Activated CD8-positive, alpha-beta memory T cell treated with anti-CD3 and anti-CD28 coated beads, Interleukin-2, amount 10 ng/mL, durations not matched to agents 7 days and 5 days (primary cell): ENCODE measurements at regions of chr12 and their contacts with region 1.

Region 1: DNA sequence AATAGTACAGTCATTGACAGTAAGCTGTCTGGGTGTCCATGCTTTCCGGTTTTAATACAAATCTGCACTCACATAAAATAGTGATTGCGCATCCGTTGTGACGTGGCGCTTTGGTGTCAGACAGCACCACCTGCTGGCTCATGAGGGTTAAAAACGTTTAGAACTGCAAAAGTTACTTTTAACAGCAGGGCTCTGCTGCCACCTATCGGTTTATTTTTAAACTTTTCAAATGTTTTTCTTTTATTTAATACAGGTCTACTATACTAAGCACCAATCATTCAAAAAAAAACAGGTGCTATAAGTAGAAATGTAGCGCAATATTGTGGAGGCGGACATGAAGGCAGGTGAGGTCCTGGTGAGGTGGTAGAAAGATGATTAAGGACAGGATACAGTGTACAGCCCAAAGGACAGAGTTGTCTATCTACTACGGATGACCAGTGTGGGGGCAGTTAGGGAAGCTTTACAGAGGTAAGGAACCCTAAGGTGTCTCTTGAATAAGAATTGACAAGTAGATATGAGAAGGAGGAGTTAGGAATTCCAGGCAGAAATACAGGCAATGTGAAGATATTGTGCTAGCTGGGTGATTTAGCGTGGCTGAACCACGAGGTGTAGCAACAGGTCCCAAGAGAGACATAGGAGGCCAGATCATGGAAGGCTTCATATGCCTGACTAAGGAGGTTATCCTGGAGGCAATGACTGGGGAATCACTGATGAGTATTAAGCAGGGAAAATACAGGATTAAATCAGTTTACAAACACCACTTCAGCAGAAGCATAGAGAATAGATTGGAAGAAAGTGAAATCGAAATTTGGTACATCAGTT is 91.5 kb upstream of the PRB2 start:
- DNase-seq: peak; percentile 88
- ATAC-seq: peak; percentile 91
- H3K4me3 Mint-ChIP-seq: no peak overlapping the region
- H3K27ac Mint-ChIP-seq: no peak overlapping the region
- H3K4me1 Mint-ChIP-seq: peaks cover 8% of the 10 kb centered on the region
- H3K27me3 Mint-ChIP-seq: peaks cover 22% of the 10 kb centered on the region

Region 2: DNA sequence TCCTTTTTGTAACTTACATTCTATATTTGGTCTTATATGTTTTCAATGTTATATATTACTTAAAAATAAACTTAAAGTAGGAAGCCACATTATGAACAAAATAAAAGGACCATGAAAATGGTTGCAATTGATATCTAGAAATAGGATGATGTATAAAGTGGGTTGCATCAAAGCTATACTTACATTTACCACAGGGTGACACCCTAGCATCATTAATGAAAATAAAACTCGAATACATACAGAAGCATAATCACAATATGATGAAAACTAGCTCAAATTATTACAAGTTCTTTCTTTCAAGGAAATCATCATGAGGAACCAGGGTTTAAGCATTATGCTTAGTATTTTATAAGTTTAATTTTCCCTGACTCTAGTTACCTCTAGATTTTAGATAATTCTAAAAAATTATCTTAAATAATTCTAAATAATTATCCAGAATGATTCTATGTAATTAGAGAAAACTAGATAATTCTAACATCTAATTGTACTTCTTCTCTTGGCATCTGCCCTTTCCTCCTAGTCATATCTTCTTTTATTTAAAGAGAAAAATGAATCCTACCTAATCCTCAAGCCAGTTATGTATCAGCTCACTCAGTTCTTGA is 715.6 kb before region 1 on chr12:
- CTCF ChIA-PET with region 1: interaction called, 20 read pairs
- DNase-seq: no peak
- ATAC-seq: no peak
- H3K4me3 Mint-ChIP-seq: no peak overlapping the region
- H3K27ac Mint-ChIP-seq: no peak overlapping the region
- H3K4me1 Mint-ChIP-seq: no peaks in the 10 kb centered on the region
- H3K27me3 Mint-ChIP-seq: peaks cover 71% of the 10 kb centered on the region

Region 3: GRCh38 chr12:11228296-11228879 is 258.4 kb before region 1 on chr12:
- CTCF ChIA-PET with region 1: interaction called, 24 read pairs
- DNase-seq: peak; percentile 51
- ATAC-seq: peak; percentile 53
- H3K4me3 Mint-ChIP-seq: no peak overlapping the region
- H3K27ac Mint-ChIP-seq: no peak overlapping the region
- H3K4me1 Mint-ChIP-seq: no peaks in the 10 kb centered on the region
- H3K27me3 Mint-ChIP-seq: peaks cover 7% of the 10 kb centered on the region